ENCODE measurements at regions of chr13 and their contacts with region 1.

Region 1: GRCh38 chr13:23810685-23811240 is 78.4 kb downstream of the MIPEP start:
- DNase-seq: no peak
- ATAC-seq: no peak
- H3K4me3 ChIP-seq: no peak overlapping the region
- H3K27ac ChIP-seq: no peak overlapping the region
- H3K4me1 ChIP-seq: no peaks in the 10 kb centered on the region
- H3K27me3 ChIP-seq: no peaks in the 10 kb centered on the region
- CTCF ChIP-seq: no peak

Region 2: GRCh38 chr13:23741879-23742510 is 68.8 kb before region 1 on chr13:
- intact Hi-C with region 1: loop called in 1 of 2 experiments (anchors 5 kb)
- DNase-seq: no peak
- ATAC-seq: no peak
- H3K4me3 ChIP-seq: no peak overlapping the region
- H3K27ac ChIP-seq: no peak overlapping the region
- H3K4me1 ChIP-seq: no peaks in the 10 kb centered on the region
- H3K27me3 ChIP-seq: no peaks in the 10 kb centered on the region
- CTCF ChIP-seq: peak; percentile 15

Measured in psoas muscle (tissue), 8 donors.